Panc1 (cell line): ENCODE measurements at regions of chr12 and their contacts with region 1.

Region 1: GRCh38 chr12:106136263-106136662 is 2.5 kb downstream of the NUAK1 start:
- DNase-seq: no peak
- ATAC-seq: peak; percentile 14
- H3K4me3 ChIP-seq: peak overlapping the region; percentile 54 to 68
- H3K27ac ChIP-seq: peak overlapping the region; percentile 96
- H3K4me1 ChIP-seq: peaks cover 68% of the 10 kb centered on the region
- H3K27me3 ChIP-seq: no peaks in the 10 kb centered on the region
- CTCF ChIP-seq: peak; percentile 95

Region 2: DNA sequence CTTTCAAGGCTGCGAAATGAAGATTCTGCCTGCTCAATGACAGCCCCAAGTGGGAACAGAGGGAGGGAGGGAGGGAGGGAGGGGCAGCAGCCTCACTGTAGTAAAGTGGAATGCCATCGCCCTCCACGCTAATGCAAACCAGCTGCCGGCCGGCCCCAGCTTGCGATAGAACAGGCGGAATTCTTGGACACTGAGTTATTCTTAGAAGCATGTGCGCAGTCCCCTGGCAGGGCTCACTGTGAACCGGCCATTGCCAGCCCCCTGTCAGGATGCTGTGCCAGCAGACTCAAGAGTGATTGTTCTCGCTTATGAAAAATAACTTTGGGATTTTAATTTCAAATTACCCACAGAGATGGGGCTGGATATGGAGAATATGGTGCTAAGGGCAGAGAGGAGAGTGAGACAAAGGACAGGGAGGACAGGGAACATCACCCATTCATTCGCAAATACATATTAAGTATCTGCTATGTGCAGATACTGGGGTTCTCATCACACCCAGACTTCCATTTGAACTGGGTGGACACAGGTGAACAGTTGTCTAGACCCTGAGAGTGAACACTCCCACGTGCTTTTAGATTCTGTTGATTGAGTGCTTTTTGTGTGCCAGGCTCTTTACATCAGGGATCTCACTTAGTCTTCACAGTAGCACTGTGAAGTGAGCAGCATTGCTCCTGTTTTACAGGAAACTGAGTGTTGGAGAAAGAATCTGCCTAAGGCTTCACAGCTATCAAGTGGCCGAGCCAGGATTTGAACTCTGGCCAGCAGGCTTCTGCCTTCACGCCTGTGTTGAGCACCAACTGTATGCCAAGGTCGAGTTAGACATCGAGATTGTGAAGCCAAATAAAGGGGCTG is 612.9 kb before region 1 on chr12:
- CTCF ChIA-PET with region 1: no interaction called
- POLR2A ChIA-PET with region 1: interaction called, 11 read pairs
- in situ Hi-C with region 1: no loop called
- intact Hi-C with region 1: no loop called
- DNase-seq: no peak
- ATAC-seq: no peak
- H3K4me3 ChIP-seq: no peak overlapping the region
- H3K27ac ChIP-seq: no peak overlapping the region
- H3K4me1 ChIP-seq: no peaks in the 10 kb centered on the region
- H3K27me3 ChIP-seq: no peaks in the 10 kb centered on the region
- CTCF ChIP-seq: no peak

Region 3: DNA sequence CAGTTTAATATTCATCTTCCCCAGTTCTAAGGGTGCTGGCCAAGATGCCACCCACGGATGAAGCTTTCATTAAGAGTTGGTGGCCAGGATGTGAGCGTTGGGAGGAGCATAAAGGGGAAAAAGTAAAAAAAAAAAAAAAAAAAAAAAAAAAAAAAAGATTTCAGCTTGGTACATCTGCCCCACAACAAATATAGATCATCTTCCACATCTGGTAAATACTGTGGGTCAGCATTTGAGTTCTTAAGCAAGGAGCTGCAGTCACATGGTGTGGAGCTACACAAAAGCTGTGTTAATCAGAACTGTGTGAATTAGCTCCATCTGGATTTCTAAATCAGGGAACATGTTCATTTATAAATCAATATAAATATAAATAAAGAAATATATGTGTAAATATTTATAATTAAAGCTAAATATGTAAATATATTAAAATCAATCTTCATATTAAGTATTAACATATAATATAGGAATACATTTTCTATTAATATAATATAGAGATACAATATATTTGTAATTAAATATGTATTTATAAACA is 259.8 kb before region 1 on chr12:
- CTCF ChIA-PET with region 1: interaction called, 13 read pairs
- POLR2A ChIA-PET with region 1: no interaction called
- in situ Hi-C with region 1: no loop called
- intact Hi-C with region 1: no loop called
- DNase-seq: no peak
- ATAC-seq: no peak
- H3K4me3 ChIP-seq: no peak overlapping the region
- H3K27ac ChIP-seq: no peak overlapping the region
- H3K4me1 ChIP-seq: no peaks in the 10 kb centered on the region
- H3K27me3 ChIP-seq: no peaks in the 10 kb centered on the region
- CTCF ChIP-seq: no peak

Region 4: GRCh38 chr12:106058256-106059182 is 77.7 kb before region 1 on chr12:
- CTCF ChIA-PET with region 1: no interaction called
- POLR2A ChIA-PET with region 1: no interaction called
- in situ Hi-C with region 1: no loop called
- intact Hi-C with region 1: no loop called
- DNase-seq: no peak
- ATAC-seq: peak; percentile 60; the same call in 1 of the 2 replicates
- H3K4me3 ChIP-seq: no peak overlapping the region
- H3K27ac ChIP-seq: no peak overlapping the region
- H3K4me1 ChIP-seq: peaks cover 3% of the 10 kb centered on the region
- H3K27me3 ChIP-seq: no peaks in the 10 kb centered on the region
- CTCF ChIP-seq: no peak

Region 5: GRCh38 chr12:106084014-106084671 is 52.1 kb before region 1 on chr12:
- CTCF ChIA-PET with region 1: no interaction called
- POLR2A ChIA-PET with region 1: no interaction called
- in situ Hi-C with region 1: no loop called
- intact Hi-C with region 1: no loop called
- DNase-seq: no peak
- ATAC-seq: peak; percentile 90
- H3K4me3 ChIP-seq: no peak overlapping the region
- H3K27ac ChIP-seq: peak overlapping the region; percentile 88
- H3K4me1 ChIP-seq: peaks cover 47% of the 10 kb centered on the region
- H3K27me3 ChIP-seq: no peaks in the 10 kb centered on the region
- CTCF ChIP-seq: no peak

Region 6: GRCh38 chr12:106149096-106149784 is 13.0 kb after region 1 on chr12:
- CTCF ChIA-PET with region 1: interaction called, 12 read pairs
- POLR2A ChIA-PET with region 1: no interaction called
- in situ Hi-C with region 1: no loop called
- intact Hi-C with region 1: no loop called
- DNase-seq: no peak
- ATAC-seq: peak; percentile 85
- H3K4me3 ChIP-seq: no peak overlapping the region
- H3K27ac ChIP-seq: no peak overlapping the region
- H3K4me1 ChIP-seq: peaks cover 19% of the 10 kb centered on the region
- H3K27me3 ChIP-seq: no peaks in the 10 kb centered on the region
- CTCF ChIP-seq: peak; percentile 90

Region 7: GRCh38 chr12:106194351-106194750 is 58.1 kb after region 1 on chr12:
- CTCF ChIA-PET with region 1: no interaction called
- POLR2A ChIA-PET with region 1: no interaction called
- in situ Hi-C with region 1: no loop called
- intact Hi-C with region 1: no loop called
- DNase-seq: no peak
- ATAC-seq: no peak
- H3K4me3 ChIP-seq: no peak overlapping the region
- H3K27ac ChIP-seq: no peak overlapping the region
- H3K4me1 ChIP-seq: no peaks in the 10 kb centered on the region
- H3K27me3 ChIP-seq: peaks cover 4% of the 10 kb centered on the region; the same call in 1 of the 2 replicates
- CTCF ChIP-seq: no peak

Region 8: DNA sequence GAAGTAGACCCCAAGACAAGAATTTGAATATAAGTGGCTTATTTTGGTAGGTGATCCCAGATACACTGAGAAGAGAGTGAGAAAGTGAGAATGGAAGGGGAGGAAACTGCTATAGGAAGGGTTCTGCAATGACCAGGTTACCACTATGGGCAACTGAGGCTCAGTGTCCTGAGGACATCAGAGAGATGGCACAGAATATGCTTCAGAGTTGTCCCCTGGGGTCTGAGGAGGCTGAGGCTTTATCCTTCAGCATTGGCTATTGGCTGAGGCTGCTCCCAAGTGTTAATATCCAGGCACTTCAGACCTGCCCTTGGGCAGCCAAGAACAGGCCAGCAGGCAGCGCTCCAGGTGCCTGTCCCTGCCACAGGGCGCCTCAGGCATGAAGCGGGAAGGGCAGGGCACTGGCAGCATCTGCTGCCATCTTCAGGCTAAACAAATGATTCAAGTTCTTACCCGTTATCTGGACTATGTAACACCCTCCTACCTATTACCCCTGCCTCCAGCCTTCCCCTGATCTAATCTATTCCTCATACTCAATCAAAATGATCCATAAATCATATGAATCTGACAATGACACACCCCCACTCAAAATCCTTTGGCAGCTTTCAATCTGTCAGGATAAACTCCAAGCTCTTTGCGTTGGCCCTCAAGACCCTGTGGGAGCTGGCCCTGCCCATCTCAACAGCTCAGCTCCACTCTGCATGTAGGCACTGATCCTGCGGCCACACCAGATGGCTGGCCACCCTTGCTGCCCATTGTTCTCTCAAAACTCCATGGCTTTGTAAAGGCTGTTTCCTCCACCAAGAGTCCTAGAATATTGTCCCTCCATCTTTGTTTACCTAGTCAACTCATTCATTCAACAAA is 69.2 kb after region 1 on chr12:
- CTCF ChIA-PET with region 1: no interaction called
- POLR2A ChIA-PET with region 1: no interaction called
- in situ Hi-C with region 1: no loop called
- intact Hi-C with region 1: loop called (anchors 2 kb)
- DNase-seq: no peak
- ATAC-seq: peak; percentile 95
- H3K4me3 ChIP-seq: no peak overlapping the region
- H3K27ac ChIP-seq: no peak overlapping the region
- H3K4me1 ChIP-seq: no peaks in the 10 kb centered on the region
- H3K27me3 ChIP-seq: no peaks in the 10 kb centered on the region
- CTCF ChIP-seq: peak; percentile 54

Region 9: DNA sequence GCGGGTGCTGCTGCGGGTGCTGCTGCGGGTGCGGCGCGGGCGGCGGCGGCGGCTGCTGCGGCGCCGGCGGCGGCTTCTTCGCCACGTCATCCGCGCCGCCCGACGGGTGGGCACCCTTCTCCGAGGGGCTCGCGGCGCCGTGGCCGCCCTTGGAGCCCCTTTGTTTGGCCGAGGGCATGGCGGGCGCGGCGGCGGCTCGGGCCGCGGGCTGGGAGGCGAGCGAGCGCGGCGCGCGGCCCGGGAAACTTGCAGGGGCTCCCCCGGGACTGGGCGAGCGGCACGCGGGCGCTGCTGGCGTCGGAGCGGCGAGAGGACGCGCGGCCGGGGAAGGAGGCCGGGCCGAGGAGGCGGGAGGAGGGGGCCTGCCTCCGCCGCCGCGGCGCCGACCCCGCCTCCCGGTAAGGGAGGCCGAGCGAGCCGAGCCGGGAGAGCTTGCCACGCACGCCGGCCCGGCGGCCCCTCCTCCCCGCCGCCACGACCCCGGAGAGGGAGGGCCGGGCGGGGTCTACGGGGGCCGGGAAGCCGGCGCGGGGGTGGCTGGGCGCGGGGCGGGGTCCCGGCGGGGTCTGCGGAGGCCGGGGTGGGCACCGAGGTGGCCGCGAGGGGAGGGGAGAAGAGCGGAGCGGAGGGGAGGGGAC is 111.5 kb after region 1 on chr12 and contains the start of gene CKAP4:
- CTCF ChIA-PET with region 1: no interaction called
- POLR2A ChIA-PET with region 1: interaction called, 3 read pairs
- in situ Hi-C with region 1: no loop called
- intact Hi-C with region 1: loop called (anchors 5 kb)
- DNase-seq: no peak
- ATAC-seq: peak; percentile 86
- H3K4me3 ChIP-seq: peak within 1 kb of the TSS; percentile 63 to 74
- H3K27ac ChIP-seq: peak within 1 kb of the TSS; percentile 74
- H3K4me1 ChIP-seq: peaks cover 4% of the 10 kb centered on the region; the same call in 1 of the 2 replicates
- H3K27me3 ChIP-seq: no peaks in the 10 kb centered on the region
- CTCF ChIP-seq: no peak
- total RNA-seq, gene CKAP4: 95.9 TPM